MCF 10A (cell line): ENCODE measurements at regions of chr6 and their contacts with region 1.

Region 1: GRCh38 chr6:34154668-34155447 is 9.0 kb upstream of the GRM4 start:
- DNase-seq: peak; percentile 43
- H3K4me3 Mint-ChIP-seq: peak overlapping the region; percentile 46
- H3K27ac Mint-ChIP-seq: no peak overlapping the region
- H3K4me1 Mint-ChIP-seq: no peaks in the 10 kb centered on the region
- H3K27me3 Mint-ChIP-seq: peaks cover 63% of the 10 kb centered on the region
- CTCF ChIP-seq: peak; percentile 99

Region 2: DNA sequence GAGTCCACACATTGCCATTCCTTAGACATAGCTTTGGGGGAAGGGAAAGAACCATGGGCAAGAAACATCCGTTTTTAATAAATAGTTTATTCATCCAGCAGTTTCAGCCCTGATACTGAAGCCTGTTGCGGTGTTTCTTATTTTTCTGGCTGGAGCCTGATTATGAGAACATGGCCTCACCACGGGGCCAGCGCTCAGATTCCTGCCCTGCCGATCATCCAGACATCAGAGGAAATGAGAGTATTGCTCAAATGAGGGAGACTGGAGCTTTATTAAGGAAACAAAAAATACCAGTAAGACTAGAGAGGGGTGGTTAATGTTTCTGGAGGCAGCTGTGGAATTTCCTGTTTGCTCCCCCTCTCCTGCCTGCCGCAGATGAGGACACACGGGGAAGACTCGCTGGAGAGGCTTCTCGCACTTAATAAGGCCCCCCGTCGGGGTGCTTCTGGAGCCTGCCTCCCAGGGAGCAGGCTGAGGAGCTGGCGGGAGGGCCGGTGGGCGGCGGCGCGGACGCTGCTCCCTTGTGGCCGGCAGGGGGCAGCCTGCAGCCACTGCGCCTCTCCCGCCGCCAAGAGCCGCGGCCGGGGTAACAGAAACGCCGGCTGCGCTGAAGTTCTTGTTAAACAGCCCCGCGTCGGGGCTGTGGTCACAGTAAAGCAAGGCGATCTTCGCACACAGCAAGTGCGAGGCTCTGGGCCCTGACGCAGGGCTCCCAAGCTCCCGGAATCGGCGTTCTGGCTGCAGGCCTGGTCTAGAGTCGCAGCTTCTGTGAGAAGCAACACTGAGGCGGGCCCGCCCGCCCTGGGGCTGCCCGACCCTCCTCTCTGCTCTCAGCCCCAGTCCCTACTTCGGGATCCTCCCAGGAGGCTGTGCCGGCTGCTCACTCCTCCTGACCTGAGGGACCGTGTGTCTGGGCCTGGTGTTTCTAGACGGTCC is 383.4 kb before region 1 on chr6:
- CTCF ChIA-PET with region 1: interaction called, 93 read pairs
- POLR2A ChIA-PET with region 1: interaction called, 3 read pairs
- intact Hi-C with region 1: loop called (anchors 1 kb)
- DNase-seq: peak; percentile 69
- H3K4me3 Mint-ChIP-seq: no peak overlapping the region
- H3K27ac Mint-ChIP-seq: no peak overlapping the region
- H3K4me1 Mint-ChIP-seq: no peaks in the 10 kb centered on the region
- H3K27me3 Mint-ChIP-seq: no peaks in the 10 kb centered on the region
- CTCF ChIP-seq: peak; percentile 90

Region 3: DNA sequence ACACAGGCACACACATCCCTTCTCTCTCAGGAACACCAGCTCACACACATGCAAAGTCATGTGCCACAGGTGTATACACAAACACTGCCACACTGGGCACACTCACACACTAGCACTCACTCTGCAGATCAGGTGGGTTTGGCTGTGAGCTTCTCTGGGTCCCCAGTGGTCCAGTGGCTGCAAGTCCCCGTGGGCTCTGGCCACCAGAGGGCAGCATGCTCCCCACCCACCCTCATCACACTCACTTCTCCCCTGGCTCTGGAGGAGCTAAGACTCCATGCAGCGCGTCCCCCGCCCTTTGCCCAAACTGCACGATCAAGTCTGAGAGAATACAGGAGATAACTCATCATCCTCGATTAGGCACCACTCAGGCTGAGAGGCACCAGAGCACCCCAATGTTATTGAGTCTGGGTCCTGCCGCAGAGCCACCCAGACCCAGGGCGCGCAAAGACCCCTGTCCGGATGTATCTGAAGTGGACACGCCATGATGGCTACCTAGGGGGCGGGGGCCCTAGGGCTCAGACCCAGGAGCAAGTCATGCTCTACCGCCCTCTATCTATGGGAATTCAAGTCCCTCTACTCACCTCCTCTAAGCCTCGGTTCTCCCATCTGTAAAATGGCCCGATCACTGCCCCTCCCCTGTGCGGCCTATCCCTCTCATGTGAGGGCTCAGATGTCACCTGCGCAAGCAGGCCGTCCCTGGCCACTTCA is 99.5 kb before region 1 on chr6:
- CTCF ChIA-PET with region 1: interaction called, 19 read pairs
- POLR2A ChIA-PET with region 1: no interaction called
- intact Hi-C with region 1: loop called (anchors 1 kb)
- DNase-seq: peak; percentile 60
- H3K4me3 Mint-ChIP-seq: no peak overlapping the region
- H3K27ac Mint-ChIP-seq: no peak overlapping the region
- H3K4me1 Mint-ChIP-seq: peaks cover 7% of the 10 kb centered on the region
- H3K27me3 Mint-ChIP-seq: peaks cover 17% of the 10 kb centered on the region
- CTCF ChIP-seq: peak; percentile 71